Calu3 (cell line): ENCODE measurements at regions of chr5 and their contacts with region 1.

Region 1: DNA sequence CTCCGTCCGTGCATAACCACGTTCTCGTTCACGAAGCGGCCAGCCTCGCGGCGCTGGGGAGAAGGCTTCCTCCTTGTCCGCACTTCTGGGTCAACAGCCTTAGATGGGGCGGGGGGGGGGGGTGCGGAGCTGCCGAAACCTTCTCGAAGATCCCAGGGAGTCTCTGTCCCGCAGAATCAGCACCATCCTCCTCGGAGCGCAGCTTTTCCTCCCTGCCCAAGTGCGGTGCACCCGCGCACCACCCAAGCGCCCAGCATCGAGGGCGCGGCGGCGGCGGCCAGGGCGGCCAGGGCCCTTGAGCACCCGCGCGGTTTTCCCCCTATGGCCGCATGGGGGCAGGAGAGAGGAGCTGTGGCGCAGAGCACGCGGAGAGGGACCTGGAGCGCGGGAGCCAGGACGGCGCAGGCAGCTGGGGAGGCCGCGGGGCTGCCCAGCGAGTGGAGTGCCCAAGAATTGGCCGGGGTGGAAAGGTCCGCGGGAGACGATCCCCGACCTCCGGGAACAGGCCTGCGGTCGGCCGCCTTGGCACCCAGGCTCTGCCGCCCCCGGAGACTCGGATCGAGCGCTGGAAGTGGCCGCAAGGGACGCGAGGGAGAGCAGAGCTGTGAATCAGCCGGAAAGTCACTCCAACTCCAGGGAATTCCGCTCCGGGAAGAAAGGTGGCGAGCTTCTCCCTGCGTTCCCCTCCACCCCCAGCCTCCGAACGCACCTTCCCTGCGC is 43.1 kb downstream of the TMEM174 start:
- DNase-seq: peak; percentile 91
- H3K4me3 Mint-ChIP-seq: peak overlapping the region; percentile 86
- H3K27ac Mint-ChIP-seq: no peak overlapping the region
- H3K4me1 Mint-ChIP-seq: peaks cover 9% of the 10 kb centered on the region
- H3K27me3 Mint-ChIP-seq: peaks cover 20% of the 10 kb centered on the region
- CTCF ChIP-seq: peak; percentile 90

Region 2: GRCh38 chr5:72920690-72921502 is 295.2 kb before region 1 on chr5:
- CTCF ChIA-PET with region 1: interaction called, 3 read pairs
- intact Hi-C with region 1: loop called (anchors 5 kb)
- DNase-seq: no peak
- H3K4me3 Mint-ChIP-seq: no peak overlapping the region
- H3K27ac Mint-ChIP-seq: peak overlapping the region; percentile 20
- H3K4me1 Mint-ChIP-seq: no peaks in the 10 kb centered on the region
- H3K27me3 Mint-ChIP-seq: no peaks in the 10 kb centered on the region
- CTCF ChIP-seq: no peak

Region 3: GRCh38 chr5:73007051-73007450 is 209.0 kb before region 1 on chr5:
- CTCF ChIA-PET with region 1: no interaction called
- intact Hi-C with region 1: no loop called
- DNase-seq: no peak
- H3K4me3 Mint-ChIP-seq: no peak overlapping the region
- H3K27ac Mint-ChIP-seq: no peak overlapping the region
- H3K4me1 Mint-ChIP-seq: no peaks in the 10 kb centered on the region
- H3K27me3 Mint-ChIP-seq: no peaks in the 10 kb centered on the region
- CTCF ChIP-seq: no peak

Region 4: DNA sequence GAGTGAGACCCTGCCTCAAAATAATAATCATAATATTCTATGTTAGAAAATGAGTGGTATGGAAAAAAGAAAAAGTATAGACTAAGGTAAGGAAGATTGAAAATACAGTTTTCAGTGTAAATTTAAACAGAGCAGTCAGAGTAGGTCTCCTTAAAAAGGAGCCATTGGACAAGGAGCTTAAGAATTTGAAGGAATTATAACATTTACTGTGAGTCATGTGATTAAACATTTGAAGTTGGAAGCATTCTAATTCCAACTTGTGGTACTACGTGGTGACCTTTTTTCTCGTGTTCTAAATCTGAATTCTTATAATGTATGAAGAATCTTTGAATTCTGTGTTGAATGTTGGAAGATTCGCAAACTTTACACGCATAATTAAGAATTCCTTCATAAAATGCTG is 135.0 kb before region 1 on chr5:
- CTCF ChIA-PET with region 1: interaction called, 8 read pairs
- intact Hi-C with region 1: loop called (anchors 5 kb)
- DNase-seq: no peak
- H3K4me3 Mint-ChIP-seq: no peak overlapping the region
- H3K27ac Mint-ChIP-seq: no peak overlapping the region
- H3K4me1 Mint-ChIP-seq: no peaks in the 10 kb centered on the region
- H3K27me3 Mint-ChIP-seq: no peaks in the 10 kb centered on the region
- CTCF ChIP-seq: no peak

Region 5: GRCh38 chr5:73298772-73299630 is 83.0 kb after region 1 on chr5:
- CTCF ChIA-PET with region 1: interaction called, 8 read pairs
- intact Hi-C with region 1: loop called (anchors 1 kb)
- DNase-seq: peak; percentile 74
- H3K4me3 Mint-ChIP-seq: peak overlapping the region; percentile 45
- H3K27ac Mint-ChIP-seq: no peak overlapping the region
- H3K4me1 Mint-ChIP-seq: peaks cover 13% of the 10 kb centered on the region
- H3K27me3 Mint-ChIP-seq: peaks cover 97% of the 10 kb centered on the region
- CTCF ChIP-seq: peak; percentile 57

Region 6: GRCh38 chr5:73454351-73455036 is 238.4 kb after region 1 on chr5:
- CTCF ChIA-PET with region 1: interaction called, 27 read pairs
- intact Hi-C with region 1: loop called (anchors 5 kb)
- DNase-seq: peak; percentile 83
- H3K4me3 Mint-ChIP-seq: no peak overlapping the region
- H3K27ac Mint-ChIP-seq: no peak overlapping the region
- H3K4me1 Mint-ChIP-seq: peaks cover 10% of the 10 kb centered on the region
- H3K27me3 Mint-ChIP-seq: peaks cover 43% of the 10 kb centered on the region
- CTCF ChIP-seq: peak; percentile 58